Activated naive CD4-positive, alpha-beta T cell treated with anti-CD3 and anti-CD28 coated beads, Interleukin-2, amount 10 ng/mL, durations not matched to agents 7 days and 5 days (primary cell): ENCODE measurements at regions of chr1 and their contacts with region 1.

Region 1: DNA sequence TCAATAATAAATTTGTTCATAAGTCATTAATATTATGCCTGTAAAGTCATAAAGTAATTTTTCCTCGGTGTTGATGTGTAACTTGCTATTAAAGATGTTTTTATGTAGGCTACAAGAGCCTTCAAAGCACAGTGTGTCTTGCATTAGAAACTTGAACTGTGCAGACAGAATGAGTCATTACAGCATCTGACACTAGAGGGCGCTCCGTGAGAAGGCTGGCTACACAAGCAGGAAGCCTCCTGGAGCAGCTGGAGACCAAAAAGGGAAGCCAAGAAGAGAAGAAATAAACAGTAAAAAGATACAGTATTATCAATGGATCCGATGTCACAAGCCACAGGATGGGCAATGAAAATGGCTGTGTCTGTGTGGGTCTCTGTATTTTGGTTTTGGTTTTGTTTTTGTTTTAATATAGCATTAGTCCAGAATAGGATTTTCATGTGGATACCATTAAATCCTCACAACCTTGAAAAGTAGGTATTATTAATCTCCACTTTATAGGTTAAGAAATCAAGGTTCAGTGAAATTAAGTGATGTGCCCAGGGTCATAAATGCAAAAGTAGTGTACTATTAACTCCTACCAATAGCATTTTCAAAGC is 16.1 kb upstream of the LRRC8D start:
- DNase-seq: peak; percentile 92
- H3K4me3 Mint-ChIP-seq: no peak overlapping the region
- H3K27ac Mint-ChIP-seq: no peak overlapping the region
- H3K4me1 Mint-ChIP-seq: peaks cover 2% of the 10 kb centered on the region
- H3K27me3 Mint-ChIP-seq: peaks cover 18% of the 10 kb centered on the region

Region 2: DNA sequence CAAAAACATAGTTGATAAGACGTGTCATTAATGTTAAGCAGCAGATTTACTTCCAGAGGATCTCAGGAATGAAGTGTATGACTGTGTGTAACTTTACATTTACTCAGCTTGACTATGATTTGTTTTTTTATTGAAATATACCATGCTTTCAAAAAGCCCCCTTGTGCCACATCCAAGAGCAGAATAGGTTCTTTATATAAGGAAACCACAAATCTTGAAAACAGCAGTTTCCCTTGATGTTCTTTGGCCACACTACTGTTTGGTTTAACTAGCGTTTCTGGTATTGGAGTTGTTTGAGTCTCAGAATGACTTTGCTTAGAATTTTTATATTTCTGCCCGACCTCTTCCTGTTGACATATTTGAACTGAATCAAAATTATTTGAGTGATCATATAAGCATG is 146.9 kb before region 1 on chr1:
- CTCF ChIA-PET with region 1: no interaction called
- DNase-seq: peak; percentile 40
- H3K4me3 Mint-ChIP-seq: peak overlapping the region; percentile 6
- H3K27ac Mint-ChIP-seq: peak overlapping the region; percentile 93
- H3K4me1 Mint-ChIP-seq: peaks cover 90% of the 10 kb centered on the region
- H3K27me3 Mint-ChIP-seq: no peaks in the 10 kb centered on the region

Region 3: DNA sequence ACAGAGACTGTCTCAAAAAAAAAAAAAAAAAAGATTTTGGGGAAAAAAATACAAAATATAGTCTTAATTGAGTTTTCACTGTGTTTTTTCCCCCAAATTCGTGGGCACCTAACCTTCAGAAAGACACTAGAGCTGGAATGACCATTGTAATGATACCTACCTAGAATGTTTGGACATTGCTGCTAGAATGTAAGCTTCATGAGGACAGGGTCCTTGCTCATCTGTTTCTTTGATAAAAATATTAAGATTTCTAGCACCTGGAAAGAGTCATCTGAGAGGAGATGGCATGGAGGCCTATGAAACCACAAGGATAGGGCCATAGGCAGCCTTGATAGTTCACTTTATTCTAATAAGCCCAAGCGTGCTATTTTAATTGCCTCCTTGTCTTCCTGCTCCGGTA is 22.6 kb after region 1 on chr1:
- CTCF ChIA-PET with region 1: no interaction called
- DNase-seq: no peak
- H3K4me3 Mint-ChIP-seq: no peak overlapping the region
- H3K27ac Mint-ChIP-seq: no peak overlapping the region
- H3K4me1 Mint-ChIP-seq: no peaks in the 10 kb centered on the region
- H3K27me3 Mint-ChIP-seq: peaks cover 5% of the 10 kb centered on the region

Region 4: DNA sequence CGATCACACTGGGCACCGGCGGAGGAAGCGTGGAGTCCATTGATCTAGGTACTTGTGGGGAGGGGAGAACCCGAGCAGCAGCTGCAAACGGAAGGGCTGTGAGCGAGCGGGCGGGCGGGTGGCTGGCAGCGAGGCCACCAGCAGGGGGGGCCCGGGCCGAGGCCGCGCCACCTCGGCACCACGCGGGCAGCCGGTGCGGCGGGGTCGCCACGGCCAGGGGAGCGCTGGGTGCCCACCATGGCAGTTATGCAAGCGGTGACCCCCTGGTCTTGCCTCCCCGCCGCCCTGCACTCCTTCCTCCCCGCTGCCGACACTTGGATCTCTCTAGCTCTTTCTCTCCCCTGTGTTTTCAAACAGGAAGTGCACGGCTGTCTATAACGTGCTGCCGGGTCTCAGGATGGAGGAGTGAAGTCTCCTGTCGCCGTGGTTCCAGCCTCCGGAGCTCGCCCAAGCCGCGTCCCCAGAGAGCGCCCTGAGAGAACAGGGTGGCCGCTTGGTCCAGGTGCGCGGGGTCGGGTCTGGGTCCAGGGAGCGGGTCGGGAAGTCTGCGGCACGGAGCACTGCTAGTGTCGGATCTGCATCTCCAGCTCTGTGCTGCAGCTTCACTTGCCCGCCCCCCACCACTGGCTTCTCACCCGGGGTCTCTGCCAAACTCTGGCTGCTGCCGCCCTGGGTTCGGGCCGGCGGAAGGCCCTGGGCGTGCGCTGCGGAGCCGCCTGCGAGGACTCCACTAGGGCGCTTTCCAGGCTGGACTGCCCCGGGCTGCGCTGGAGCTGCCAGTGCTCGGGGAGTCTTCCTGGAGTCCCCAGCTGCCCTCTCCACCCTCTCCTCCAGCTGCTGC is 38.8 kb after region 1 on chr1:
- CTCF ChIA-PET with region 1: interaction called, 12 read pairs
- DNase-seq: peak; percentile 85
- H3K4me3 Mint-ChIP-seq: peak overlapping the region; percentile 94
- H3K27ac Mint-ChIP-seq: peak overlapping the region; percentile 94
- H3K4me1 Mint-ChIP-seq: peaks cover 57% of the 10 kb centered on the region
- H3K27me3 Mint-ChIP-seq: no peaks in the 10 kb centered on the region